GM10248 (cell line): ENCODE measurements at regions of chr2 and their contacts with region 1.

Region 1: GRCh38 chr2:56099963-56100362 is 83.8 kb upstream of the CCDC85A start:
- DNase-seq: no peak
- CTCF ChIP-seq: no peak

Region 2: GRCh38 chr2:56088411-56088810 is 11.6 kb before region 1 on chr2:
- CTCF ChIA-PET with region 1: interaction called, 13 read pairs
- POLR2A ChIA-PET with region 1: no interaction called
- DNase-seq: no peak
- CTCF ChIP-seq: no peak